Activated naive CD4-positive, alpha-beta T cell treated with anti-CD3 and anti-CD28 coated beads for 36 hours (primary cell): ENCODE measurements at regions of chr5 and their contacts with region 1.

Region 1: DNA sequence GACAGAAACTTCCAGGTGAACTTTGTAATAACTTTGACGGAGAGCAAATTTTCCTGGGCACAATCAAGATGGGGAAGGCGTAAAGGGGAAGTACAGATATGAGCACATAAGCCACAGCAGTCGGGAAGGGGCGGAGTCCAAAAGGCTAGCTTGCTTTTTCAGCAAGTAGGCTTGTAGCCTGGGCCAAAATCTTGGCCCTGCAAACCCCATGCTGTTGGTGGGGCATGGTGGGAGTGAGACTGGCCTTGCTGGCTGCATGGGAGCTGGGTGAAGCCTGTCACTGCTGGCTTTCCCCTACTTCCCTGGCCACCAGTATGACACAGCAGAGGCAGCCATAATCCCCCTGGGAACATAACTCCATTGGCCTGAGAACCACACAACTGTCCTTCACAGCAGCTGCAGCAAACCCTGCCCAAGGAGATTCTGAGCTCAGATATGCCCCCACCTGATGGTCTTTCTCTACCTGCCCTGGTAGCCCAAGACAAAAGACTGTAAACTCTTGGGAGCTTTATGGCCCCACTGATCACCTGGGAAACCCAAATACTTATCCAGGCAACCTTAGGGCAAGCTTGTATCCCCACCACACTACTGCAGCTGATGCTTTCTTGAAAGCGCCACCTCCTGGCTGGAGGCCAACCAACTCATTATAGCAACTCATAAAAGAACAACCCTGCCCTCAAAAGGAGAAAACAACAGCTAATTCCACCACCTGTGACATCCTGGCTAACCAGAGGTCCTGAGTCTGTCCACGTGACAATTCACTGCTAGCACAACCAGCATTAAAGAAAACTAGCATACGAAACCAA is 24.0 kb downstream of the DCTN4 start:
- DNase-seq: peak; percentile 53
- H3K4me3 Mint-ChIP-seq: no peak overlapping the region
- H3K27ac Mint-ChIP-seq: peak overlapping the region; percentile 10
- H3K4me1 Mint-ChIP-seq: peaks cover 54% of the 10 kb centered on the region
- H3K27me3 Mint-ChIP-seq: no peaks in the 10 kb centered on the region

Region 2: DNA sequence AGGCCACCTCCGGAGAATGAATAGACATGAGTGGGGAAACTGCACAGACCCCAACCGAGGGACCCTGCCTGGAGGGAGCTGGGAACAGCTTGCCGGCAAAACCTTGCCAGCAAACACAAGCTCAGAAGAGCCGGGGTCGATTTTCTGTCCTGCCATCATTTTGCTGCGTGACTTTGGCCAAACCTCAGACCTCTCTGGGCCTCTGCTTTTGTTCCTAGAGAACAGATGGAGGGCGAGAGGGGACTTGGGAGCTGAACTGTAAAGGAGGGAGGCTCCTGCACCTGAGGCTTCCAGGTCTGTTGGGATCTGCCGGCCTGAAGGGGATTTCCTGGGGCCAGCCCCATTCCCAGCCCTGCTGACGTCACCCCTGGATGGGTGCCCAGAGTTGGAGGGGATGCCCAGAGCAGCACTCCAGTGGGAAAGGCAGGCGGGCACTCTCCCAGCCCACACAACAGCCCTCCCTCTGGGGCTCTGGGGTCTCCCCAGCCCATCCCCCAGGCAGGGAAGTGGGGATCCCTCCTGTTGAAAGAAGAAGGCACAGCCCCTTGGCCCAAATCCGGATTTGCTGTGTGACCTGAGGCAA is 134.8 kb before region 1 on chr5:
- CTCF ChIA-PET with region 1: no interaction called
- intact Hi-C with region 1: no loop called
- DNase-seq: no peak
- H3K4me3 Mint-ChIP-seq: no peak overlapping the region
- H3K27ac Mint-ChIP-seq: no peak overlapping the region
- H3K4me1 Mint-ChIP-seq: no peaks in the 10 kb centered on the region
- H3K27me3 Mint-ChIP-seq: no peaks in the 10 kb centered on the region

Region 3: GRCh38 chr5:150672237-150672883 is 62.4 kb before region 1 on chr5:
- CTCF ChIA-PET with region 1: no interaction called
- intact Hi-C with region 1: loop called (anchors 2 kb)
- DNase-seq: peak; percentile 51
- H3K4me3 Mint-ChIP-seq: peak overlapping the region; percentile 74
- H3K27ac Mint-ChIP-seq: no peak overlapping the region
- H3K4me1 Mint-ChIP-seq: no peaks in the 10 kb centered on the region
- H3K27me3 Mint-ChIP-seq: peaks cover 14% of the 10 kb centered on the region